Posterior cingulate gyrus (tissue), 11 donors: ENCODE measurements at regions of chr12 and their contacts with region 1.

Region 1: DNA sequence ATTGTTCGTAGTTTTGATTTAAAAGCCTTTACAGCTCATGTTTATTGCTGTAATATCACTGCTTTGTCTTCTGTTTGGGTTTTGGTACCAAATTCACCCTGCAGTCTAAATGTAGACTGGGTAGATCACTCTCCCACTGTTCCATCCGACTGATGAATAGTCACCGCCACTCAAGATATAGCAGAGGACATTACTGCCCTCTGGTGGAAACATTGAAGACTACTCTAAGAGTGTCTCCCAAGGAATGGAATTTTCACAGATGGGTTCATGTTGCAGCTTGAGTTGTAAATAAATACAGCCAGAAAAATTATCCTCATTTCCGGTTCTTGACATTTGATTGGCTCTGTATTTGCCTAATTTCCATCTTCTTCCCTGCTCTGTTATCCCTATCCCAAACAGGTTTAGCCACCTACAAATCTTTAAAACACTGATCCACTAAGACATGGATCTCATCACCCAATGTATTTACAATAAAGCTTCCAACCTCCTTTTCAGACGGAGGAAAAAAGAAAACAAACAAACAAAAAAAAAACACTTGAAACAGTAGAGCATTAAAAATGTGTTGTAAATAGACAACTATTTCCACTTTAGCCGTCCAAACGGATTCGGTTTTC is 198.3 kb upstream of the CPNE8 start:
- DNase-seq: peak in 1 of 10 donors; percentile 13

Region 2: DNA sequence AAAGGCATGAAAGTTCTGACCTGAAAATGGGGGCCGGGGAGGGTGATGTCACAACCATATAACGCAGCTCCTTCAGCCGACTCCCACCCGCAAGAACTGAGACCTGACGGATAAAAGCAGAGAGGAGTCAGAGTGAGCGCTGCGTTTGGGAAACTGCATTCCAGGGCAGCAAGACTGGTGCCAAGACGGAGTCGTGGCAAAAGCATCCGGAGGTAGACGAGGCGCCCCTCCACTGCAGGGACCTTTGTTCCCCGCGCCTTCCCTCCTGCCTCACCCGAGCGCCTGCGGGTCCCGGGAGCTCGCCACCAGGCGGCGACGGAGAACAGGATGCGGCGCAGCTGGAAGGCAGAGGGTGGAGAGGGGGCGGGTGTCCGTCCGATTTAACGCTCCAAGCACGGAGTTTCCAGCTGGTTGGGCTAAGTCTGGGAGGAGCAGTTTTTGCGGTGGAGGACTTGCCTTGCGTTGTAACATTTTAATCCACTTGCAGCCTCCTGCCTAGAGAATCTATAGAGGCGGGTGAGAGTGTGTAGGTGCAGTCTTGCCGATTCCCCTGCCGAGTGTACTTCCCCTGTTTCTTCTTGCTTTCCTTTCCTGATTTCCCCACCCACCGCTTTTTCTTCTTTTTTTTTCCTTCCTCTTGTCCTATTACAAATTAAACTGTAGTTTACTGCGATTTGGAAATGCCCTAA is 197.0 kb before region 1 on chr12:
- intact Hi-C with region 1: loop called (anchors 2 kb)
- DNase-seq: peak; percentile 71 to 97 (median 82)